PC-3 (cell line): ENCODE measurements at regions of chr10 and their contacts with region 1.

Region 1: DNA sequence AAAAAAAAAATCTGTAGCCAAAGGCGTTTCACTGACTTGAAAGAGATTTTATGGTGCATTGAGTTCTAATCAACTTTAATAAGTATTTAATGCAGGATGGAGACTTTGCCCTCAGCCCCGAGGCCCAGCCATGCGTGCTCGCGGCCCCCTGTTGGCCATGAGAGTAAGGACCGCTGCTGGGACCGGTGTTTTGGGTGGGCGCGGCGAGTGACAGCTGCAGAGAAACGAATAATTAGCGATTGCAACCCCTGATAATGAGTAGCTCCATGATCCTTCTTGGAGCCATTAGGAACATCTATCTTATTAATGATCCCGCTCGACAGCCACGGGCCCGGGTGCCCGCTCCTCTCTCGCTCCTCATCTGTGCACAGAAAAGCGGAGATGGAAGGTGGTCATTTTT is 347.4 kb downstream of the RPS24 start:
- DNase-seq: no peak
- ATAC-seq: no peak
- H3K4me3 ChIP-seq: no peak overlapping the region
- H3K27ac ChIP-seq: no peak overlapping the region
- H3K4me1 ChIP-seq: peaks cover 12% of the 10 kb centered on the region
- H3K27me3 ChIP-seq: peaks cover 65% of the 10 kb centered on the region
- CTCF ChIP-seq: peak; percentile 78

Region 2: DNA sequence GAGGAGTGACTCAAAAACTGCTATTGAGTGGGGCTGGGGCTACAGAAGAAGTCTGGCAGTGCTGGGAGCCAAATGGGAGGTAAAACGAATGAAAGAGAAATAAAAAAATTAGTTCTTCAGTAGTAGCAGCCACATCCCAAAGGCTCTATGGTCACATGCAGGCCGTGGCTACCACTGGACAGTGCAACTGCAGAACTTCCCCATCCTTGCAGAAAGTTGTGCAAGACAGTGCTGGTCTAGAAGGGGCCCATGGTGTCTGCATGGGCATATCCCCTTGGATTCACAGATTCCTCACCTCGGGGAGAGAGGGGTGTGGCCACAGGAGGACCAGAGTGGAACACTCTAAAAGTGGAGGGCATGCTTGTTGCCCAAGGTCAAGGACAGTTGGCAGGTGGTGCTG is 299.8 kb before region 1 on chr10:
- CTCF ChIA-PET with region 1: no interaction called
- POLR2A ChIA-PET with region 1: no interaction called
- intact Hi-C with region 1: no loop called
- DNase-seq: no peak
- ATAC-seq: no peak
- H3K4me3 ChIP-seq: no peak overlapping the region
- H3K27ac ChIP-seq: no peak overlapping the region
- H3K4me1 ChIP-seq: no peaks in the 10 kb centered on the region
- H3K27me3 ChIP-seq: peaks cover 73% of the 10 kb centered on the region
- CTCF ChIP-seq: no peak

Region 3: DNA sequence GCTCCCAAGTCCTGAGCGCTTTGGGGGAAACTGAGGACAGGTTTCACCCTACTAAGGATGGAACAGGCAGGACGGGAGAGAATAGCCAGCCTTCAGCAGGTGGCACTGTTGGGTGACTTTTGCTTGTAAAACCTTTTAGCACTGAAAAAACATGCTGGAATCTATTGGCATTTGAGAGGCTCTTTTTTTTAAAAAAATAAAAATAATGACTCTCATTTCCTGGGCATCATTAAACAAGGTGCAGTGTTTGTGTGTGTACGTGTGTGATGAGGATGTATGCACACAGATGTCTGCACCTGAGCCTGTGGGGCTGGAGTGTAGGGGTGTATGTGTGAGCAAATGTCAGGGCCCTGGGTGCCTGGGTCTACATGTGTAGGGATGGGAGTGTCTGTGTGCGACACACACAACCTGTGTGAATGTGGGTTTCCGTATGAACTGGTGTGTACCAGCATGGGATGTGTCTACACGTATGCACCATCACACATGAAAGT is 169.5 kb before region 1 on chr10:
- CTCF ChIA-PET with region 1: no interaction called
- POLR2A ChIA-PET with region 1: no interaction called
- intact Hi-C with region 1: loop called (anchors 10 kb)
- DNase-seq: peak; percentile 92
- ATAC-seq: peak; percentile 66
- H3K4me3 ChIP-seq: no peak overlapping the region
- H3K27ac ChIP-seq: no peak overlapping the region
- H3K4me1 ChIP-seq: no peaks in the 10 kb centered on the region
- H3K27me3 ChIP-seq: peaks cover 69% of the 10 kb centered on the region
- CTCF ChIP-seq: peak; percentile 100